ENCODE measurements at regions of chr12 and their contacts with region 1.

Region 1: DNA sequence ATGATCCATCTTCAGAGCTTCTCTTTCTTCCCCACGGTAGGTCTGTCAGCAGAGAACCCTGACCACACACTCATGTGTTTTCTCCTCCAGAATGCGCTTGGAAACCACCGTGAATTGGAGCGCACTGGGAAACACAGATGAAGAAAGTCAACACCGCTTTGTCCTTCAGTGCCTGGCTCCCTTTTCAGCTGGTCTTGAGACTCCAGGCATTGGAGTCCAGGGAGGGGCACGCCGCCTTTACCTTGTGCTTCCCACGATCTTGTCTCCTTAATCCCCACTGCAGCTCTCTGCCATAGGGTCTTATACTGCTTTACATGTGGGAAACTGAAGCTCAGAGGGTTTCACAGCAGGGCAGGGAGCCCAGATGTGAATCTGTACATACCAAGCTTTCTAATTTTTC is 1.1 kb downstream of the FAM90A1 start:
- DNase-seq: no peak
- ATAC-seq: no peak

Region 2: DNA sequence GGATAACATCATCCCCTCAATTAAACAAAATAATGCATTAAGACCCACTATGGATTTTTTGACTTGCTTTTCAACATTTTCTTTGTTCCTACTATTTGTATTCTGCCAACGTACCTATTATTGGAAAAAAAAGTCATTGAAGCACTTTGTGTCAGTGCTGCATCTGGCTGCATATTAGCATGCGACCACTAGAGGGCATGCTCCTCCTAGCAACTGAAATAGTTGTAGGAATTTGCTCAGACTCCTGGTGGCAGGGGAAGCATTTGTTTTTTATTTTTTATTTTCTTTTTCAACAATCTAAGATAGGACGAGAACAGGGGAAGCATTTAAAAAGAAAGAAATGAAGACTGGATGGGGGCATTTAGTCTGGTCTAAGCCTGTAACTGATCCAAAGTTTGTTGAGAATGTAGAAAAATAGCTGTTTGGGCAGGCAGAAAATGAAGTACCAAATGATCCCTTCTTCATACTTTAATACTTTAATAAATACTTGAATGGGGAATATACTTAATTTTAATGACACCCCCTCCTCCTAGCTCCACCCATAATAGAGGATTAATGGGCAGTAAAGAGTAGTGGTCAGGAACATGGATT is 117.5 kb before region 1 on chr12:
- intact Hi-C with region 1: loop called in 1 of 2 experiments (anchors 10 kb)
- DNase-seq: peak; percentile 77
- ATAC-seq: peak; percentile 68 to 71

Measured in left cardiac atrium (tissue), 4 donors.